Left ventricle myocardium superior (tissue), 1 donor: ENCODE measurements at regions of chr10 and their contacts with region 1.

Region 1: DNA sequence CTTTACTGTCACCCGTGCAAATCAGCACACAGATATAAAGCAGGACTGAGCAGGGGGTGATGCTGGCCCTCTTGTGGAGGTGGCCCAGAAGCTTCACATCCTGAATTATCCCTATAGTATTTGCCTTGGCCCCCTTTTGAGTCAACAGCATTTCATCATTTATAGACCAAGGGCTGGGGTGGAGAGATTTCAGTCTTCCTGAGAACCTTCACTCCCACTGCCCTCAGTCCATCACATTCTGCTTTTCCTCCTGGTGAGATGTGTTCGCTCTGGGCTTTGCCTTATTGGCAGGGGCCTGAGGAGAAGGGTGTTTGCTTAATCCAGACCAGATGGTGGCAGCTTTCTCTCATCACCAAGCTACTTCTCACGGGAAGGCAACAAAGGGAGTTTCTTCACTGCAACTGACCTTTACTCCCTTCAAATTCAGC is 47.7 kb downstream of the NOC3L start:
- DNase-seq: no peak
- ATAC-seq: peak; percentile 55

Region 2: GRCh38 chr10:93095225-93095624 is 1219.8 kb before region 1 on chr10:
- intact Hi-C with region 1: no loop called
- DNase-seq: no peak
- ATAC-seq: no peak

Region 3: DNA sequence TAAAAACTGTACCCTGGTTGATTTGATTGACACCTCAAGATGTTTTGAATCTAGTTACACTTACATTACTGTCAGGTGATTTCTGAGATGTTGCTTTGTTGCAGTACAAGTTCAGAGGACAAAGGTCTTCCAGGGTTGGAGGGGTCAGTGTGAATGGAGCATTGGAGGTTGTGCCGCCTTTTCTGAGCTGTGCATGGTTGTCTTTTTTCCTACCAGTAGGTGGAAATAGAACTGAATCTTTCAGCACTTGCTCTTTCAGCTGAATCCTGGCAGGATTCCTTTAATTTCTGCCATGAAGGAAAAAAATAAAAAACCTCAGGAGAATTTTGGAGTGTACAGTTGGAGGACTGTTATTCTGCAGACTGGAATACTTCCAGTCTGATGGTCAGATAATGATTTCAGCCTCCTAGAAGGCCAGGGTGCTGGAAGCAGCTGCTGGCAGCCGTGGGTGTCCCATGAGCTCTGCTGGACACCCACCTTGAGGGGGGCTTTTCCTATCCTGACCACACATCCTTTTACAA is 238.7 kb before region 1 on chr10:
- intact Hi-C with region 1: loop called (anchors 10 kb)
- DNase-seq: peak; percentile 40
- ATAC-seq: peak; percentile 84